ENCODE measurements at regions of chr10 and their contacts with region 1.

Region 1: GRCh38 chr10:114779803-114780609 is 41.6 kb upstream of the FHIP2A start:
- DNase-seq: no peak
- ATAC-seq: no peak
- H3K4me3 Mint-ChIP-seq: no peak overlapping the region
- H3K27ac Mint-ChIP-seq: no peak overlapping the region
- H3K4me1 Mint-ChIP-seq: no peaks in the 10 kb centered on the region
- H3K27me3 Mint-ChIP-seq: no peaks in the 10 kb centered on the region
- CTCF ChIP-seq: no peak

Region 2: DNA sequence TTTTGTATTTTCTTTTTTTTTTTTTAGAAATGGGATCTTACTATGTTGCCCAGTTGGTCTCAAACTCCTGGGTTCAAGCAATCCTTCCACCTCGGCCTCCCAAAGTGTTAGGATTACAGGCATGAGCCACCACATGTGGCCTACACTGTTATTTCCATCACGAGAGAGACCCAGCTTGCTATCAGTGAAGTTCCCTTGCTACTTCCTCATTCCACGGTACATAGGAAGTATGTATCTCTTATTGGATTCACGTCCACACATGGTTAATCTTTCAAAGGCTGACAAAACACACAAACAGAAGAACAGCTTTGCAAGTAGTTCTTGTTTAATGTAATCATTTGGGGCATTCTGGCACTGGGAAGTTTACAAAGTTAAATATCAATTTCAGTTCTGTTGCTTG is 977.0 kb before region 1 on chr10:
- CTCF ChIA-PET with region 1: no interaction called
- POLR2A ChIA-PET with region 1: no interaction called
- intact Hi-C with region 1: loop called (anchors 5 kb)
- DNase-seq: no peak
- ATAC-seq: no peak
- H3K4me3 Mint-ChIP-seq: no peak overlapping the region
- H3K27ac Mint-ChIP-seq: no peak overlapping the region
- H3K4me1 Mint-ChIP-seq: peaks cover 7% of the 10 kb centered on the region
- H3K27me3 Mint-ChIP-seq: peaks cover 3% of the 10 kb centered on the region
- CTCF ChIP-seq: no peak